ENCODE measurements at regions of chr16 and their contacts with region 1.

Region 1: DNA sequence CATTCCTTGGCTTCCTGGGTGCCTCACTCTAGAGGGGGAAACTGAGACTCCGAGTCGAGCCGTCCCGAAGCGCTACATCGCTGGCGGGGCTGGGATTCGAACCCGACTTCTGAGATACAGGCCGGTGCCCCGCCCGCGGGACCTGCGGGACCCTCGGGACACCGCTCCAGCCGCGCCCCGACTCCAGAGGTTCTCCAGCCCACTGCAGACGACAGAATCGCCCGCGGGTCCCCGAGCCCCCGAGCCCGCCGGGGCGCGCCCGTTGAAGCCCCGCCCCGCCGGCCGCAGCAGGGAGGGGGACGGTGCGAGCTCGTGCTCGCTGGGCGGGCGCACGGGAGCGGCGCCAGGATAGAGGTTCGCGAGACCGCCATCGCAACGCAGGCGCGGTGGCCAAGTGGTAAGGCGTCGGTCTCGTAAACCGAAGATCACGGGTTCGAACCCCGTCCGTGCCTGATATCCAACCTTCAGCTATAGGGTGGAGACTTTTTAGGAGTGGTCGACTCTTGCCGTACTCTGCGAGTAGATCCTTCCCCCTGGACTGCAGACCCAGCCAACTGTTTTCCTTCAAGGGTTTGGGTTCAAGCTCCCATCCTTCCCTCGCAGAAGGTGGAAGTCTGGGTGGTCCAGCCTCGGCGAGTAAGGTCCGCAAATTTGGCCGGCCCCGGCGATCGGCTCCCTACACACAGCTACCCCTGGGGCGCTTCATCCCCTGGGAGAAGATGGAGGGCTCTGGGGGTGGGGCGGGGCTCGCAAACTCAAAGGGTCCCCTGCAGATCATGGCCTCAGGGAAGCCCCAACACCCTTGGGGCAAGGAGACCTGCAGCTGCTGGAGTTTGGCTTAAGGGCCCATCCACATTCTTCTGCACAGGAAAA is 214.6 kb downstream of the MRTFB start:
- DNase-seq: peak; percentile 89 to 99 (median 97)
- ATAC-seq: peak; percentile 90
- H3K4me3 ChIP-seq: peak overlapping the region; percentile 67
- H3K4me3 Mint-ChIP-seq: peak overlapping the region; percentile 84 to 96 (median 94)
- H3K27ac ChIP-seq: peak overlapping the region; percentile 69
- H3K27ac Mint-ChIP-seq: peak overlapping the region; percentile 85 to 97 (median 95)
- H3K4me1 ChIP-seq: peaks cover 0 to 3% of the 10 kb centered on the region in 2 donors
- H3K4me1 Mint-ChIP-seq: peaks cover 2 to 32% (median 19%) of the 10 kb centered on the region in 7 donors
- H3K27me3 ChIP-seq: no peaks in the 10 kb centered on the region
- H3K27me3 Mint-ChIP-seq: peaks cover 0 to 3% (median 0%) of the 10 kb centered on the region in 5 donors

Region 2: DNA sequence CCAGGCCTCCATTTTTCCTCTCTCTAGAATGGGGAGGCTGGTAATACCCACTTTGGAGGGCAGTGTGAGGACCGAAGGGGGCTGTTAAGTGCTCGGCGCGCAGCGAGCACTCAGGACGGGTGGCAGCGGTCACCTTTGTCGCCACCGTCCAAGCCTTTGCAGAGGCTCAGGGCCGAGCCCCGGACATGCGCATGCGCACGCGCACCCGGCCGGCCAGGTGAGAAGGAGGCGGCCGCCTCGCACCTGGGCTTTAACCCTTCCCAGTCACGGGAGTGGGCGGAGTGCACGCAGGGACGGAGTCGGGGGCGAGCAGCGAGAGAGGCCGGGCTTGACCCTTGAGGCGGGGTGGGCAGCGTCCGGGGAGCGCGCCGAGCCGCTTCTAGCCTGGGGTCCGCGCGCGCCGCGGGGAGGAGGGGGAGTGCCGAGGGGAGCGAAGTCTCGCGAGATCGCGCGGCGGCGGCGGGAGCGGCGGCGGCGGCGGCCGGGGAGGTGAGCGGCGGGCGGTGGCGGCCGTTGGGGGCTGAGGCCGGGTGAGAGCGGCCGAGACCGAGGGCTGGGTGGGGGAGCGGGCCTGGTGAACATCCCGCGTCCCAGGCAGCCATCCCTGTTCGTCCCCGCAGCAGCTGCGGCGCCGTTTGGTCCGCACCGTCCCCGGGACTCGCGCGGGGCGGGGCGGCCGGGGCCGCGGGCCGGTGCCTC is 214.7 kb before region 1 on chr16 and contains the start of gene MRTFB:
- CTCF ChIA-PET with region 1: no interaction called
- POLR2A ChIA-PET with region 1: no interaction called
- intact Hi-C with region 1: loop called (anchors 1 to 2 kb)
- DNase-seq: peak; percentile 72 to 93 (median 85)
- ATAC-seq: peak; percentile 88
- H3K4me3 ChIP-seq: peak within 1 kb of the TSS; percentile 94
- H3K4me3 Mint-ChIP-seq: peak within 1 kb of the TSS; percentile 82 to 93 (median 90)
- H3K27ac ChIP-seq: peak within 1 kb of the TSS; percentile 79
- H3K27ac Mint-ChIP-seq: peak within 1 kb of the TSS; percentile 82 to 95 (median 87)
- H3K4me1 ChIP-seq: peaks cover 6 to 8% of the 10 kb centered on the region in 2 donors
- H3K4me1 Mint-ChIP-seq: peaks cover 8 to 35% (median 20%) of the 10 kb centered on the region in 7 donors
- H3K27me3 ChIP-seq: no peaks in the 10 kb centered on the region
- H3K27me3 Mint-ChIP-seq: peaks cover 0 to 6% (median 4%) of the 10 kb centered on the region in 5 donors
- total RNA-seq, gene MRTFB: 18.7 to 33.2 (median 27.6) TPM

Region 3: GRCh38 chr16:14193316-14193871 is 92.4 kb before region 1 on chr16:
- CTCF ChIA-PET with region 1: no interaction called
- POLR2A ChIA-PET with region 1: no interaction called
- intact Hi-C with region 1: loop called in 1 of 2 experiments (anchors 10 kb)
- DNase-seq: peak in 8 of 9 donors; percentile 27 to 51 (median 34)
- ATAC-seq: peak; percentile 67
- H3K4me3 ChIP-seq: peak overlapping the region; percentile 14
- H3K4me3 Mint-ChIP-seq: peak overlapping the region; percentile 71 to 97 (median 84)
- H3K27ac ChIP-seq: peak overlapping the region; percentile 74
- H3K27ac Mint-ChIP-seq: peak overlapping the region; percentile 87 to 96 (median 90)
- H3K4me1 ChIP-seq: peaks cover 5 to 46% of the 10 kb centered on the region in 2 donors
- H3K4me1 Mint-ChIP-seq: peaks cover 23 to 78% (median 74%) of the 10 kb centered on the region in 7 donors
- H3K27me3 ChIP-seq: no peaks in the 10 kb centered on the region
- H3K27me3 Mint-ChIP-seq: no peaks in the 10 kb centered on the region

Region 4: GRCh38 chr16:14249291-14250032 is 36.3 kb before region 1 on chr16:
- CTCF ChIA-PET with region 1: interaction called, 7 read pairs
- POLR2A ChIA-PET with region 1: no interaction called
- intact Hi-C with region 1: loop called in 1 of 2 experiments (anchors 2 kb)
- DNase-seq: peak in 8 of 9 donors; percentile 25 to 66 (median 49)
- ATAC-seq: peak; percentile 59
- H3K4me3 ChIP-seq: no peak overlapping the region
- H3K4me3 Mint-ChIP-seq: no peak overlapping the region
- H3K27ac ChIP-seq: no peak overlapping the region
- H3K27ac Mint-ChIP-seq: no peak overlapping the region
- H3K4me1 ChIP-seq: no peaks in the 10 kb centered on the region
- H3K4me1 Mint-ChIP-seq: no peaks in the 10 kb centered on the region
- H3K27me3 ChIP-seq: no peaks in the 10 kb centered on the region
- H3K27me3 Mint-ChIP-seq: no peaks in the 10 kb centered on the region

Region 5: DNA sequence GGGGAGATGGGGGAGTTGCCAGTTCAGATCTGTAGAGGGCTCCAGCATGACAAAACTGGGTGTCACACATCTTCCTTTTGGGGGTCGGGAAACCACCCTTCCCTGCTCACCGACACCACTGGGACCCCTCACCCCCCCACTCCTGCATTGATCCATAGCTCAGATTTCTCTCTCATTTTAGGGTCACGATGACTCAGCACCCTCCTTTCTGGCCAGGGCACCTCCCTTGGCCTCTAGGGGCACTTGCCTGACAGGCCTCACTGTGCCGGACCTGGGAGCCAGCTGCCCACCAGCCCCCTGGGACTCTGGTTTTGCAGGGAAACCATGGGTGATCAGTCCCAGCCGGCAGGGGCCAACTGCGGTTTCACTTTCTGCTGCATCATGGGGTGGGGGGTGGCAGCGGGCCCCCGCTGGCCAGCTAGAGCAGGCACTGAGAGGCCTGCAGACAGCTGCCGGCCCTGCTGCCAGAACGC is 24.8 kb after region 1 on chr16:
- CTCF ChIA-PET with region 1: interaction called, 17 read pairs
- POLR2A ChIA-PET with region 1: interaction called, 18 read pairs
- intact Hi-C with region 1: loop called in 1 of 2 experiments (anchors 1 kb)
- DNase-seq: no peak
- ATAC-seq: no peak
- H3K4me3 ChIP-seq: no peak overlapping the region
- H3K4me3 Mint-ChIP-seq: peak overlapping the region in 2 of 10 donors; percentile 77 to 86
- H3K27ac ChIP-seq: no peak overlapping the region
- H3K27ac Mint-ChIP-seq: peak overlapping the region in 2 of 9 donors; percentile 25 to 26
- H3K4me1 ChIP-seq: peaks cover 0 to 43% of the 10 kb centered on the region in 2 donors
- H3K4me1 Mint-ChIP-seq: peaks cover 6 to 55% (median 45%) of the 10 kb centered on the region in 7 donors
- H3K27me3 ChIP-seq: no peaks in the 10 kb centered on the region
- H3K27me3 Mint-ChIP-seq: peaks cover 0 to 7% (median 0%) of the 10 kb centered on the region in 5 donors

Region 6: GRCh38 chr16:14364386-14365204 is 78.8 kb after region 1 on chr16:
- CTCF ChIA-PET with region 1: no interaction called
- POLR2A ChIA-PET with region 1: no interaction called
- intact Hi-C with region 1: no loop called
- DNase-seq: no peak
- ATAC-seq: no peak
- H3K4me3 ChIP-seq: no peak overlapping the region
- H3K4me3 Mint-ChIP-seq: no peak overlapping the region
- H3K27ac ChIP-seq: no peak overlapping the region
- H3K27ac Mint-ChIP-seq: no peak overlapping the region
- H3K4me1 ChIP-seq: no peaks in the 10 kb centered on the region
- H3K4me1 Mint-ChIP-seq: peaks cover 0 to 6% (median 0%) of the 10 kb centered on the region in 7 donors
- H3K27me3 ChIP-seq: no peaks in the 10 kb centered on the region
- H3K27me3 Mint-ChIP-seq: peaks cover 0 to 4% (median 0%) of the 10 kb centered on the region in 5 donors

Region 7: GRCh38 chr16:14529010-14529669 is 243.4 kb after region 1 on chr16:
- CTCF ChIA-PET with region 1: no interaction called
- POLR2A ChIA-PET with region 1: no interaction called
- intact Hi-C with region 1: loop called in 1 of 2 experiments (anchors 1 kb)
- DNase-seq: peak; percentile 15 to 72 (median 59)
- ATAC-seq: peak; percentile 73
- H3K4me3 ChIP-seq: no peak overlapping the region
- H3K4me3 Mint-ChIP-seq: no peak overlapping the region
- H3K27ac ChIP-seq: no peak overlapping the region
- H3K27ac Mint-ChIP-seq: peak overlapping the region in 1 of 9 donors; percentile 9
- H3K4me1 ChIP-seq: no peaks in the 10 kb centered on the region
- H3K4me1 Mint-ChIP-seq: peaks cover 0 to 12% (median 4%) of the 10 kb centered on the region in 7 donors
- H3K27me3 ChIP-seq: no peaks in the 10 kb centered on the region
- H3K27me3 Mint-ChIP-seq: no peaks in the 10 kb centered on the region

Region 8: GRCh38 chr16:14632692-14633569 is 347.2 kb after region 1 on chr16 and contains the start of gene BFAR:
- CTCF ChIA-PET with region 1: no interaction called
- POLR2A ChIA-PET with region 1: interaction called, 7 read pairs
- intact Hi-C with region 1: loop called (anchors 1 kb)
- DNase-seq: peak; percentile 95 to 99 (median 99)
- ATAC-seq: peak; percentile 85
- H3K4me3 ChIP-seq: peak within 1 kb of the TSS; percentile 89
- H3K4me3 Mint-ChIP-seq: peak within 1 kb of the TSS; percentile 92 to 100 (median 100)
- H3K27ac ChIP-seq: peak within 1 kb of the TSS; percentile 93
- H3K27ac Mint-ChIP-seq: peak within 1 kb of the TSS; percentile 94 to 100 (median 99)
- H3K4me1 ChIP-seq: peaks cover 38 to 45% of the 10 kb centered on the region in 2 donors
- H3K4me1 Mint-ChIP-seq: peaks cover 32 to 76% (median 68%) of the 10 kb centered on the region in 7 donors
- H3K27me3 ChIP-seq: no peaks in the 10 kb centered on the region
- H3K27me3 Mint-ChIP-seq: no peaks in the 10 kb centered on the region
- total RNA-seq, gene BFAR: 43.9 to 82.0 (median 66.0) TPM

Measured in naive thymus-derived CD4-positive, alpha-beta T cell (primary cell).